CD14-positive monocyte (primary cell): ENCODE measurements at regions of chr9 and their contacts with region 1.

Region 1: DNA sequence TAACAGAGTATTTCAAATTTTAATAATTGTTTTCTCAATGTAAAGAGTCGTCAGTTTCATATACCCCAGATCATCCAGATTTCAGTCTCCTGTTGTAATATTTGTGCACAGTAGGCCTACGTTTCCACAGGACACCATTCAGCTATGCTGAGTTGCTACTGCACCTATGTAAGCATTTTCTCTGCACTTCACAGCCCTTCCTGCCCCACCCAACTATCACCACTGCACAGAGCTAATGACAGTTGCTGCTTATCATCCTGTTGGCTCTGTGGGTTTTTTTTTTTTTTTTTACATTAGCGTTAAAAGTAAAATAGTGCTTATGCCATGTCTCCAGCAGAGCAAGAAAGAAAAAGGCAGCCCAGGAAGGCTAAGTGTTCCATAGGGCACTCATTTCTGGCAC is 5.9 kb upstream of the PRKACG start:
- DNase-seq: no peak
- H3K4me3 ChIP-seq: no peak overlapping the region
- H3K4me3 Mint-ChIP-seq: no peak overlapping the region
- H3K27ac ChIP-seq: no peak overlapping the region
- H3K27ac Mint-ChIP-seq: no peak overlapping the region
- H3K4me1 ChIP-seq: no peaks in the 10 kb centered on the region
- H3K4me1 Mint-ChIP-seq: peaks cover 9% of the 10 kb centered on the region
- H3K27me3 ChIP-seq: no peaks in the 10 kb centered on the region
- H3K27me3 Mint-ChIP-seq: peaks cover 5 to 8% (median 5%) of the 10 kb centered on the region in 3 donors
- CTCF ChIP-seq: no peak

Region 2: DNA sequence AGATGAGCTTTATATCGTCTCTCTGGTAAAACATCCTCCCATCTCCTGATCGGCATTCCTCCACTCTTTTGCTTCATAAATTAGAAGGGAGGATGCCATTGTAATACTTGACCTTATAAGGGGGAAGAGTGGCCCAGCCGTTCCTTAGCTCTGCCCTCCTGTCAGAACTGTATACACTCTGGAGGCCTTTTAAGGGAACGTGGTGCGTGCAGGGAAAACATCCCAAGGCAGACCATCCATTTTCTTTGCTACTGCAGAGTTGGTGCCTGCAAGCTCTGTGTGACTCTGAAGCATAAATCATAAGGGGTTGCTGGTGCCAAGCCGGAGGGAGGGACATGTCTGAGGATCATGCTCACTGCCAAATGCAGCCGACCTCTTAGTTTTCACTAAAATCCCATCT is 573.0 kb before region 1 on chr9:
- intact Hi-C with region 1: no loop called
- DNase-seq: no peak
- H3K4me3 ChIP-seq: no peak overlapping the region
- H3K4me3 Mint-ChIP-seq: no peak overlapping the region
- H3K27ac ChIP-seq: no peak overlapping the region
- H3K27ac Mint-ChIP-seq: no peak overlapping the region
- H3K4me1 ChIP-seq: no peaks in the 10 kb centered on the region
- H3K4me1 Mint-ChIP-seq: no peaks in the 10 kb centered on the region
- H3K27me3 ChIP-seq: no peaks in the 10 kb centered on the region
- H3K27me3 Mint-ChIP-seq: peaks cover 0 to 2% (median 0%) of the 10 kb centered on the region in 3 donors
- CTCF ChIP-seq: no peak

Region 3: DNA sequence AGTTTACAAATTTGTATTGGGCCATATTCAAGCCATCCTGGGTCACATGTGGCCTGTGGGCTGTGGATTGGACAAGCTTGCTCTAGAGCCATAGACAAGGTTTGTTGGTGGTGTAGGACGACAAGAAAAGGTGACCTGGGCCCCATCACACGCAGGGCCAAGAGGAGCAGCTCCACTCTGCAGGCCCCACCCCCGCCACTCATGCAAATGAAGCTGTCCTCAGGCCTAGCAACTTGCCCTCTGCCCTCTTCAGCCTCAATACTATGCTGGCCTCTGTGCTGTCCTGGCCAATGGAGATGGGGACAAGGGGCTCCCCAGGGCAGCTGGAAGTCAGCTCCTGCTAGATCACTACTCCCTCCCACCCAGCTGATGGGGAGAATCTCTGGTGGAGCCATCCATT is 423.9 kb before region 1 on chr9:
- intact Hi-C with region 1: loop called in 1 of 2 experiments (anchors 5 kb)
- DNase-seq: no peak
- H3K4me3 ChIP-seq: no peak overlapping the region
- H3K4me3 Mint-ChIP-seq: no peak overlapping the region
- H3K27ac ChIP-seq: no peak overlapping the region
- H3K27ac Mint-ChIP-seq: peak overlapping the region in 1 of 7 donors; percentile 43
- H3K4me1 ChIP-seq: no peaks in the 10 kb centered on the region
- H3K4me1 Mint-ChIP-seq: no peaks in the 10 kb centered on the region
- H3K27me3 ChIP-seq: no peaks in the 10 kb centered on the region
- H3K27me3 Mint-ChIP-seq: peaks cover 0 to 7% (median 2%) of the 10 kb centered on the region in 3 donors
- CTCF ChIP-seq: no peak

Region 4: DNA sequence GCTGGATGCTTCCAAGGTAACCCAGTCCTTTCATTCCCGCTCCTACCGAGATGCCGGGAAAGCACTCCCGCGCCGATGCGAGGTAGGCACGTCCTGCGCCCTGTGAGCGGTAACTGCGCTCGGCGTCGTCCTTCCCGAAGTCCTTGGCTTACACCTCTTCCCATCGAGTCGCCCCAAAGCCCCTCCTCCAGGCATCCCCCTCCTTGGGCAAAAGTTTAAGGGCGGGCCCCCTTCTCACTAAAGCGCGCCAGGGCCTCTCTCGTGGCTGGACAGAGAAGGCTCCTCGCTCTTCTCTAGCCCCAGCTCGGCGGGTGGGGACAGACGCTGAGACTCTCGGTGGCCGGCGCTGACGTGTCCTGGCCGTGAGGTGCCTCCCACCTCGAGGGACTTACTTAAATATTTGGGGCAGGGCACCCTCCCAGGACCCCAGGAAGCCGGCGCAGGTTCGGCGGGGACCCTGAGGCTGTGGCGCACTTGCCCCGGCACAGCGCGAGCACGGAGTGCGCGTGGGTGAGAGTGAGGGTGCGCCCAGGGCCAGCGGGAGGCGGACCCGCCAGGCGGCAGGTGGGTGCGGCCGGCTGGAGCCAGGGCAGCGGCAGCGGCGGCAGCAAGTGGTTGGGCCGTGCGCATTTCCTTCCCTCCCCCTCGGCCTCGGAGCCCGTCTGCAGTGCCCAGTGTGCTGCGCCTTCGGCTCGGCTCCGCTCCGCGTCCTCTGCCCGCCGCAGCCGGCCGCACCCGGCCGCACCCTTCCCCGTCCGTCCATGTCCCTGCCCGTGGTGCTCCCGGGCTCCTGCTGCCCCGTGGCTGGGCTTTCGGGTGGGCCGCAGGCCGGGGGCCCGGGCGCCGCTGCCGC is 305.0 kb after region 1 on chr9 and contains the start of gene ENTREP1:
- intact Hi-C with region 1: no loop called
- DNase-seq: no peak
- H3K4me3 ChIP-seq: peak within 1 kb of the TSS in 1 of 3 experiments; percentile 49
- H3K4me3 Mint-ChIP-seq: peak within 1 kb of the TSS; percentile 62 to 90
- H3K27ac ChIP-seq: no peak within 1 kb of the TSS
- H3K27ac Mint-ChIP-seq: no peak within 1 kb of the TSS
- H3K4me1 ChIP-seq: no peaks in the 10 kb centered on the region
- H3K4me1 Mint-ChIP-seq: peaks cover 9% of the 10 kb centered on the region
- H3K27me3 ChIP-seq: peaks cover 51 to 64% of the 10 kb centered on the region in 2 donors
- H3K27me3 Mint-ChIP-seq: peaks cover 52 to 73% (median 61%) of the 10 kb centered on the region in 3 donors
- CTCF ChIP-seq: no peak
- polyA plus RNA-seq, gene ENTREP1: not detected